HEK293 (cell line): ENCODE measurements at regions of chr10 and their contacts with region 1.

Region 1: DNA sequence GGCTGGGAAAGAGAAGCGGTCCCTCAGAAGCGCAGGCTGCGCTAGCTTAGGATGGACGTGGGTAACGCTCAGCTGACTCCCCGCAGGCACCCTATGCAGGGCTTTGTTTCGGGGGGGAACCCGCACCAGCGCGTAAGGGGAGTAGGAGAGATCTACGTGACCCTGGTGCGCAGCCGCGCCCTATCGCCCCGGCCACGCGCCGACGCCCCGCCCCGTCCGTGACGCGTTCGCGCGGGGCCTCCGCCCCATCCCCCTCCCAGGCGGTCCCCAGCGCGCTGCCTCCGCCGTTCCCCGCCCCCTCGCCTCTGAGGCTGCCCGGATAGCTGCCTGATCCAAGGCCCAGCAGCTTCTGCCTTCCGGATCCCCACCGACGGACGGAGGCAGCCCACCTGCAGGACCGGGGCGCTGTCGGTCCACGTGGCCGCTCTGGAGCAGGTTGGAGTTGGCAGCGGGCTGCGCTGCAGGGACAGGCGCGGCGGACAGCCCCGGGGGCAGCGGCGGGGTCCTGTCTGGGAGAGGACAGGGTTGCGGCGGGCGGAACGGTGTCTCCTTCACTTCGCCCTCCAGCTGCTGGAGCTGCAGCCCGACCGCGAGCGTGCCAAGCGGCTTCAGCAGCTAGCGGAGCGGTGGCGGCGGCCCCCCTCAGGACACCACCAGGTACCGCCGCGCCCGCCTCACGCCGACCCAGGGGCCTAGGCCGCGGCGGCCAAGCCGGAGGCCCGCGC is at the start of gene VDAC2:
- H3K4me3 ChIP-seq: peak within 1 kb of the TSS; percentile 95
- H3K27ac ChIP-seq: peak within 1 kb of the TSS; percentile 97
- H3K4me1 ChIP-seq: peaks cover 2% of the 10 kb centered on the region; the same call in 1 of the 2 replicates
- CTCF ChIP-seq: no peak; the same call in none of the 2 replicates

Region 2: GRCh38 chr10:75137533-75138438 is 72.7 kb before region 1 on chr10:
- CTCF ChIA-PET with region 1: no interaction called
- POLR2A ChIA-PET with region 1: interaction called, 11 read pairs
- H3K4me3 ChIP-seq: no peak overlapping the region
- H3K27ac ChIP-seq: no peak overlapping the region
- H3K4me1 ChIP-seq: peaks cover 3% of the 10 kb centered on the region; the same call in 1 of the 2 replicates
- CTCF ChIP-seq: no peak

Region 3: GRCh38 chr10:75150656-75151055 is 59.8 kb before region 1 on chr10:
- CTCF ChIA-PET with region 1: no interaction called
- POLR2A ChIA-PET with region 1: no interaction called
- H3K4me3 ChIP-seq: no peak overlapping the region
- H3K27ac ChIP-seq: no peak overlapping the region
- H3K4me1 ChIP-seq: no peaks in the 10 kb centered on the region
- CTCF ChIP-seq: no peak

Region 4: GRCh38 chr10:75187961-75188426 is 22.4 kb before region 1 on chr10:
- CTCF ChIA-PET with region 1: interaction called, 6 read pairs
- POLR2A ChIA-PET with region 1: interaction called, 11 read pairs
- H3K4me3 ChIP-seq: no peak overlapping the region
- H3K27ac ChIP-seq: no peak overlapping the region
- H3K4me1 ChIP-seq: no peaks in the 10 kb centered on the region
- CTCF ChIP-seq: peak; percentile 52; the same call in 1 of the 2 replicates

Region 5: GRCh38 chr10:75226656-75227055 is 16.2 kb after region 1 on chr10:
- CTCF ChIA-PET with region 1: interaction called, 16 read pairs
- POLR2A ChIA-PET with region 1: interaction called, 28 read pairs
- H3K4me3 ChIP-seq: no peak overlapping the region
- H3K27ac ChIP-seq: no peak overlapping the region
- H3K4me1 ChIP-seq: peaks cover 15% of the 10 kb centered on the region
- CTCF ChIP-seq: no peak

Region 6: GRCh38 chr10:75235375-75236177 is 25.1 kb after region 1 on chr10 and contains the start of gene COMTD1:
- CTCF ChIA-PET with region 1: interaction called, 16 read pairs
- POLR2A ChIA-PET with region 1: interaction called, 36 read pairs
- H3K4me3 ChIP-seq: peak within 1 kb of the TSS; percentile 62
- H3K27ac ChIP-seq: peak within 1 kb of the TSS; percentile 92
- H3K4me1 ChIP-seq: no peaks in the 10 kb centered on the region; the same call in 1 of the 2 replicates
- CTCF ChIP-seq: peak; percentile 100

Region 7: GRCh38 chr10:75444781-75445386 is 234.4 kb after region 1 on chr10:
- CTCF ChIA-PET with region 1: no interaction called
- POLR2A ChIA-PET with region 1: no interaction called
- H3K4me3 ChIP-seq: no peak overlapping the region
- H3K27ac ChIP-seq: no peak overlapping the region
- H3K4me1 ChIP-seq: peaks cover 5% of the 10 kb centered on the region
- CTCF ChIP-seq: no peak

Region 8: GRCh38 chr10:75612904-75613684 is 402.6 kb after region 1 on chr10:
- CTCF ChIA-PET with region 1: no interaction called
- POLR2A ChIA-PET with region 1: no interaction called
- H3K4me3 ChIP-seq: no peak overlapping the region
- H3K27ac ChIP-seq: peak overlapping the region; percentile 96
- H3K4me1 ChIP-seq: peaks cover 16% of the 10 kb centered on the region
- CTCF ChIP-seq: no peak